K562 (cell line): ENCODE measurements at regions of chr5 and their contacts with region 1.

Region 1: DNA sequence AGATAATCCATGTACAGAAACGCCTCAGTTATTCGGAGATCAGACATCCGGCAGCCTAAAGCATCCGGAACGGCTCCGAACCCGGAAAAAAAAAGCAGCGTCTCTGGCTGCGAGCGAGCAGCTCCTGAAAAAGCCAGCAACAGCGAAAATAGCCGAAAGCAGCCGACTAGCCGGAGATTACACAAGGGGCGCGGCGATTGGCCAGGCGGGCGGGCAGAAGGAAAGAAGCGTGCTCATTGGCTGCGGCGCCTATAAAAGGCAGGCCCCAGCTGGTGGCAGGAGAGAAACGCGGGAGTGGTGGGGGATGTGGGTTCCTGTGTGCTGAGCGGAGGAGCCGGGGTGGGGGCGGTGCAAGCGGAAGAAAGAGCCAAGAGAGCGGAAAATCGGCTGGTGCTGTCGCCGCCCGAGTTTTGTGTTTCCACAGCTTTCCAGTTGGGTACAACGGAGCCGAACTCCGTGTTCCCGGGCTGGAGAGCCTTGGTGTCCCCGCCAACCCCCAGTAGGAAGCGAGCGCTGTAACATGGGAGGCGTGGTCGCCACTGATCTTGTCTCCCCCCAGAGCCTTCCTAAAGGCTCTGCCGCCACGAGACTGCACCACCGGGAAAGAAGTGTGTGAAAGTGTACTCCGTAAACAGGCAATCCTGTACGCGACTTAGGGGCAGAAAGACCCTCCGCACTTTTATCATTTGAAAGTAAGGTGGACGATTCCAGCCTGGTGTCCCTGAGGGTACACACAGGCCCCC is at the start of gene ARL15:
- DNase-seq: peak; percentile 97 to 99 (median 98)
- ATAC-seq: peak; percentile 73
- H3K4me3 ChIP-seq: peak within 1 kb of the TSS; percentile 75
- H3K27ac ChIP-seq: peak within 1 kb of the TSS; percentile 94
- H3K4me1 ChIP-seq: peaks cover 8 to 37% of the 10 kb centered on the region in 2 experiments
- H3K27me3 ChIP-seq: no peaks in the 10 kb centered on the region
- CTCF ChIP-seq: no peak
- EP300 ChIP-seq: no peak
- POLR2A ChIP-seq: peak; percentile 100
- RAD21 ChIP-seq: peak in 1 of 2 experiments; percentile 27; a peak in 1 of 4 replicates
- polyA plus RNA-seq, gene ARL15: 18.5 to 22.4 TPM

Region 2: DNA sequence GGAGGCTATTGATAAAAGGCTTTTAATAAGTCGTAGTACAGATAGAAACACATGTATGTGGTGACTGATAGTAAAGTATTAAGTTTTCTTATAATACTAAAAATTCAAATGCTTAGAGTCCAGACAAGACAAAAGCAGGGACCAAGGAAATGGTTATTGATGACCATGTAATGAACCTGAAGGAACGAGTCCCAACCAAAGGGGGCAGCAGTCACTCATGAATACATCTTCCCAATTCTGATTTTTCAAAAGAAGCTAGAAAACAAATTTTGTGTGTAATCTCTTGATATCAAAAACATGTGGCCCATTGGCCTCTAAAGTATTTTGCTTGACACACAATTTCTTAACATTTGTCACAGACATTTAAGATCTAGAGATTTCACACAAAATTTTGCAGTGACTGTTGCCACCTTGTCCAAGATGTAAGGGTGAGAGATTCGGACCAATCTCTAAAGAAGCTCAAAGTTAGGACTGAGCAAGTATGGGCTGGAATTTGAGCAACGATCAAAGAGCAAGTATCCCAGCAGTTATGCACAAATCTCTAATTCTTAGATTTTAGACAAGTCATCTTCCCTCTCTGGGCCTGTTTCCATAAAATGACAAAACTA is 67.0 kb before region 1 on chr5:
- CTCF ChIA-PET with region 1: no interaction called
- POLR2A ChIA-PET with region 1: interaction called, 7 read pairs
- in situ Hi-C with region 1: no loop called
- intact Hi-C with region 1: loop called (anchors 2 kb)
- DNase-seq: peak; percentile 29 to 54 (median 33)
- ATAC-seq: peak; percentile 66
- H3K4me3 ChIP-seq: no peak overlapping the region
- H3K27ac ChIP-seq: no peak overlapping the region
- H3K4me1 ChIP-seq: peaks cover 0 to 6% of the 10 kb centered on the region in 2 experiments; a peak in 3 of 5 replicates
- H3K27me3 ChIP-seq: no peaks in the 10 kb centered on the region
- CTCF ChIP-seq: peak; percentile 24 to 65 (median 57); a peak in 5 of 6 replicates
- EP300 ChIP-seq: no peak
- POLR2A ChIP-seq: no peak
- RAD21 ChIP-seq: peak; percentile 56 to 68

Region 3: DNA sequence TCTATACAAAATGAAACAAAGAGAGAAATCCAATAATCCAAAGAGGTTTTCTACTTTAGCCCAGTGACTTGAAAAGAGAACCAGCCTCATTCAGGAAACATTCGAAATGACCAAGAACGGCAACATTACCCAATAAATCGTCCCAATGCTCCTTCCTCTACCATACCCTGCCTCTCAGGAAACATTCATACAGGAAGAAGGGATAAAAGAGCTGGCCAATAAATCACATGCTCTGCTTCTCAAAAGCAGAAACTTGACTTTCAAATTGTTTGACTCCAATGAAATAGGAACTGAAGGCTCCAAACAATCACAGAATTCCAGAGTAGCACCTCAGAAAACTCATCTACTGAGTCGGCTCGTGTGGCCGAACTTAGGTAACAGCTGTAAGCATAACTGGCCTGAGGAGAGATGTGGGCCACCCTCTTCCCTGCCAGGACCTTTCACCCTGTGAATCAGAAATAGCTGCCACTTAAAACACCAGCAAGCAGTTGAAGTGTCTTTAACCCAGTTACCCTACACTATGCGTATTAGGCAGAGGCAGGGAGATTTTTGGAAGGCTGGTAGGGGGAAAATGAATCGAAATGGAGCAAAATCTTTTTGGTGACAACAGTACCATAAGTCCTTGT is 14.8 kb before region 1 on chr5:
- CTCF ChIA-PET with region 1: no interaction called
- POLR2A ChIA-PET with region 1: interaction called, 58 read pairs
- in situ Hi-C with region 1: no loop called
- intact Hi-C with region 1: loop called (anchors 2 kb)
- DNase-seq: no peak
- ATAC-seq: peak; percentile 50
- H3K4me3 ChIP-seq: no peak overlapping the region
- H3K27ac ChIP-seq: peak overlapping the region; percentile 8; the same call in 1 of the 3 replicates
- H3K4me1 ChIP-seq: peaks cover 13 to 44% of the 10 kb centered on the region in 2 experiments
- H3K27me3 ChIP-seq: no peaks in the 10 kb centered on the region
- CTCF ChIP-seq: no peak
- EP300 ChIP-seq: no peak
- POLR2A ChIP-seq: no peak
- RAD21 ChIP-seq: no peak

Region 4: GRCh38 chr5:54329731-54330709 is 19.4 kb after region 1 on chr5:
- CTCF ChIA-PET with region 1: no interaction called
- POLR2A ChIA-PET with region 1: interaction called, 78 read pairs
- in situ Hi-C with region 1: no loop called
- intact Hi-C with region 1: loop called (anchors 1 kb)
- DNase-seq: no peak
- ATAC-seq: no peak
- H3K4me3 ChIP-seq: no peak overlapping the region
- H3K27ac ChIP-seq: no peak overlapping the region
- H3K4me1 ChIP-seq: peaks cover 8 to 31% of the 10 kb centered on the region in 2 experiments
- H3K27me3 ChIP-seq: no peaks in the 10 kb centered on the region
- CTCF ChIP-seq: no peak
- EP300 ChIP-seq: no peak
- POLR2A ChIP-seq: no peak
- RAD21 ChIP-seq: no peak

Region 5: DNA sequence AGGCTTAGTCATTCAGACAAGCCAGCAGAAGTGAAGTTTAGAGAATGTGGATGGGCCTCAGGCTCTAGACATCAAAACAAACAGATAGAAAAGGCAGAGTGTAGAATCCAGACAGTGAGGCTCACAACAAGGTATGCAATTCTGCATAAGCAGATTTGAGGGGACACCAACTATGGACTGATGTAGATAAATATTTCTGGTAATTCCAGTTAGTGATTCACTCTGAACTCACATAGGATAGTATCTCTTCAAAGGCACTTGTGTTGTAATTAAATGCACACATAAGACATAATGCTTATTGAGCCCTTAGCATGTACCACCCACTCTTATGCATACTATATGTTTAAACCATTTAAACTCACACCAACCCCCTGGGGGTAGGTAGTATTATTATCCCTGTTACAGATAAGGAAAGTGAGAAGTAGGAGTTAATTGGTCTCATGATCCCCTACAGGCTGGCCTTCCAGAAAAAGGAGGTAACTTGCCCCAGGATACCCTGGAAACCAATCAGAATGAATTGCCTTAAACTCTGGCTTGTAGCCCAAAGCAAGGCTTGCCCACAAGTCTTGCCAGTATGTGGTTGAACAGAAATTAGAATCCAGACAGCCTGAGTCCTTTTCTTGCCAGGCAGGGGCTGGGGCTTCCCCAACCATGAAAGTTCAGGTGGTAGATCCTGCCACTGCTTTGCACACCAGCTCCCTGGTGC is 105.4 kb after region 1 on chr5:
- CTCF ChIA-PET with region 1: interaction called, 3 read pairs
- POLR2A ChIA-PET with region 1: interaction called, 8 read pairs
- in situ Hi-C with region 1: no loop called
- intact Hi-C with region 1: loop called (anchors 1 kb)
- DNase-seq: no peak
- ATAC-seq: peak; percentile 42
- H3K4me3 ChIP-seq: no peak overlapping the region
- H3K27ac ChIP-seq: no peak overlapping the region; the same call in 2 of the 3 replicates
- H3K4me1 ChIP-seq: peaks cover 0 to 3% of the 10 kb centered on the region in 2 experiments; a peak in 4 of 5 replicates
- H3K27me3 ChIP-seq: no peaks in the 10 kb centered on the region
- CTCF ChIP-seq: no peak
- EP300 ChIP-seq: no peak
- POLR2A ChIP-seq: no peak
- RAD21 ChIP-seq: no peak